Posterior cingulate gyrus (tissue), 11 donors: ENCODE measurements at regions of chr11 and their contacts with region 1.

Region 1: DNA sequence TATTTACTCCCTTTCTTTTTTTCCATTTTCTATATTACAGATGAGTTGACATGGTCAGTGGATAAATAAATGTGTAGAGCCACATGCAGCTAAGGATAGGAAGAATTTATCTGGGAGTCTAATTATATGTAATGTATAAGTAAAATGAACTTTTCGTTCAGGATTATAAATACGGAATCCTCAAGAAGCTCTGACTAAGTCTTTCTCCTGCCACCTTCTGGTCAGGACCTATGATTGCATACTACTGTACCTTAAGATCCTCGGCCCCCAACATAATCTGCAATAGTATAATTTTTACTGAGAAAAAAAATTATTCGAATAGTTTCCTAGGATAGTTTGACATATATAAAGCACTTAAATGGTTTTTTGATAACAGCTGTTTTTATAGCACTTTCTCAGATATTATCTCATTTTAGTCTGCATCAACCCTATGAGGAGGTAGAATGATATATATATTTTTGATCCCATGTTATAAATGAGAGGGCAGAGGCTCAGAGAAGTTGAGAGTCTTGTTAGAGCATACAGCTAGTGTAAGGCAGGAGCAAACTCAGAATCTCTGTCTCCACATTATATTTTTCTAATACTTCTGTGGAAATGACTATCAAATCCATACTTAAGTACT is 36.1 kb downstream of the CCDC90B start:
- DNase-seq: no peak

Region 2: DNA sequence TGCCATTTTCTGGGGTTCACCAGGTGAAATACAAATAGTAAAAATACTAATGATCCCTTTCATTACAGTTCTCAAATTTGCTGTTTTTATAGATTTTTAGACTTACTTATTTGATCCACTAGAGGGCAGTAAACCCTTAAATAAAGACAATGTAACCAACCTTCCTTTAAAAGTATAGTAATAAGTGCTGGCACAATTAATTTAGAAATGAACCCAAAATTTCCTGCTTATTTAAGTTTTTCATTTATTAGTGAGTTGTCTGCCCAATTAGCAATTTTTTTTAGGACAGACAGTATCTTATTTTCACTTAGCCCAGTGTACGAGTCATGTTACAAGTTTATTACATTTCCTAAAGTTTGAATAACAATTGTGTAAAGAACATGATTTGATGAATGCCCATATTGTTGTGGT is 343.8 kb before region 1 on chr11:
- intact Hi-C with region 1: loop called (anchors 2 kb)
- DNase-seq: no peak